WTC11 (cell line): ENCODE measurements at regions of chr9 and their contacts with region 1.

Region 1: GRCh38 chr9:4315582-4316215 is 15.8 kb upstream of the GLIS3 start:
- DNase-seq: peak; percentile 84
- ATAC-seq: peak; percentile 100
- H3K4me3 Mint-ChIP-seq: no peak overlapping the region
- H3K27ac Mint-ChIP-seq: no peak overlapping the region
- H3K4me1 Mint-ChIP-seq: peaks cover 3% of the 10 kb centered on the region; the same call in 1 of the 2 replicates
- H3K27me3 Mint-ChIP-seq: no peaks in the 10 kb centered on the region
- CTCF ChIP-seq: peak; percentile 70

Region 2: GRCh38 chr9:4197548-4197947 is 118.2 kb before region 1 on chr9:
- CTCF ChIA-PET with region 1: no interaction called
- POLR2A ChIA-PET with region 1: no interaction called
- DNase-seq: peak; percentile 16
- ATAC-seq: peak; percentile 97
- H3K4me3 Mint-ChIP-seq: no peak overlapping the region
- H3K27ac Mint-ChIP-seq: no peak overlapping the region
- H3K4me1 Mint-ChIP-seq: no peaks in the 10 kb centered on the region; the same call in 1 of the 2 replicates
- H3K27me3 Mint-ChIP-seq: no peaks in the 10 kb centered on the region; the same call in 1 of the 2 replicates
- CTCF ChIP-seq: peak; percentile 63

Region 3: GRCh38 chr9:4297151-4297785 is 18.4 kb before region 1 on chr9:
- CTCF ChIA-PET with region 1: interaction called, 11 read pairs
- POLR2A ChIA-PET with region 1: no interaction called
- DNase-seq: peak; percentile 67
- ATAC-seq: peak; percentile 52
- H3K4me3 Mint-ChIP-seq: peak overlapping the region; percentile 95
- H3K27ac Mint-ChIP-seq: peak overlapping the region; percentile 28; the same call in 1 of the 2 replicates
- H3K4me1 Mint-ChIP-seq: peaks cover 19% of the 10 kb centered on the region
- H3K27me3 Mint-ChIP-seq: peaks cover 69% of the 10 kb centered on the region
- CTCF ChIP-seq: no peak

Region 4: DNA sequence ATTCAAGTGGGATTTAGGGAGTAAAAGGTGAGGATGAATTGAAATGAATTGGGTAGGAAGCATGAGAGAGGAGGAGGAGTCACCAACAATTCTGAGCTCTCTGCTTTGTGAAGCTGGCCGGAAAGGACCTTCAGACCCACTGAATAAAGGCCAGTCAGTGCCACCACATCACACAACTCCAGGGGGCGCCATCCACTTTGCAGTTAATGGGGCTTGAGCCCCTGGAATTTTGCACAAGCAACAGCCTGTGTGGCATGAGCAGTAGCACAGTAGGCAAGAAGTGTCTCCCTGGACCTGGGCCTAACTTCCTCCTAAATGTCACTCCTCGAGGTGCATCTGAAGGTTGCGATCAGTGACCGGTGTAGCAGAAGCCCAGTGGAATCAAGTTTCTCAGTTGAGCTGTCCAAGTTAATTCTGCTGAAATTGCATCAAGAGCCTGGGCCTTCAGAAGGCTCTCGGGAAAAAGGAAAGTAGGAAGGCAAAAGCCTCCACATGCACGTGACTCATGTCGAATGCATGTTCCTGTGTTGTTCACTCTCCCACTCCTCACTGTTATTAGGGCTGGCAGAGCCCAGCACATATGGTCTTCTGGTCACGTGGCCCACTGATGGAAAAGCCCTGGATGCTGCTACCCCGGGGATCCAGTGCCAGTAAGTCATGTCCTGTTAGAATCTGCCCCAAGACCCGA is 11.9 kb after region 1 on chr9:
- CTCF ChIA-PET with region 1: interaction called, 27 read pairs
- POLR2A ChIA-PET with region 1: interaction called, 4 read pairs
- DNase-seq: peak; percentile 52
- ATAC-seq: peak; percentile 72
- H3K4me3 Mint-ChIP-seq: no peak overlapping the region
- H3K27ac Mint-ChIP-seq: no peak overlapping the region
- H3K4me1 Mint-ChIP-seq: no peaks in the 10 kb centered on the region
- H3K27me3 Mint-ChIP-seq: no peaks in the 10 kb centered on the region; the same call in 1 of the 2 replicates
- CTCF ChIP-seq: 0 out of 2 replicates have a peak, but pooled peaks have one; percentile 38

Region 5: GRCh38 chr9:4339357-4339756 is 23.7 kb after region 1 on chr9:
- CTCF ChIA-PET with region 1: interaction called, 14 read pairs
- POLR2A ChIA-PET with region 1: no interaction called
- DNase-seq: peak; percentile 80
- ATAC-seq: peak; percentile 73
- H3K4me3 Mint-ChIP-seq: no peak overlapping the region
- H3K27ac Mint-ChIP-seq: peak overlapping the region; percentile 54
- H3K4me1 Mint-ChIP-seq: peaks cover 3% of the 10 kb centered on the region
- H3K27me3 Mint-ChIP-seq: no peaks in the 10 kb centered on the region; the same call in 1 of the 2 replicates
- CTCF ChIP-seq: peak; percentile 83

Region 6: GRCh38 chr9:4366591-4367330 is 51.1 kb after region 1 on chr9:
- CTCF ChIA-PET with region 1: interaction called, 31 read pairs
- POLR2A ChIA-PET with region 1: no interaction called
- DNase-seq: peak; percentile 54
- ATAC-seq: peak; percentile 72
- H3K4me3 Mint-ChIP-seq: no peak overlapping the region
- H3K27ac Mint-ChIP-seq: no peak overlapping the region
- H3K4me1 Mint-ChIP-seq: no peaks in the 10 kb centered on the region; the same call in none of the 2 replicates
- H3K27me3 Mint-ChIP-seq: no peaks in the 10 kb centered on the region
- CTCF ChIP-seq: peak; percentile 73